Activated T-helper 1 cell treated with anti-CD3 and anti-CD28 coated beads, Interleukin-12 subunit alpha, Interleukin-12 subunit beta, Interleukin-2, Interleukin-4 antibody, amounts not matched to agents 30 ng/mL and 10 ng/mL and 1 ng/mL, durations not matched to agents 14 hours and 24 hours and 36 hours (primary cell): ENCODE measurements at regions of chr10 and their contacts with region 1.

Region 1: GRCh38 chr10:114876602-114877300 is 55.2 kb downstream of the FHIP2A start:
- DNase-seq: peak; percentile 15
- H3K4me3 Mint-ChIP-seq: no peak overlapping the region
- H3K27ac Mint-ChIP-seq: no peak overlapping the region
- H3K4me1 Mint-ChIP-seq: peaks cover 32% of the 10 kb centered on the region
- H3K27me3 Mint-ChIP-seq: peaks cover 21% of the 10 kb centered on the region

Region 2: DNA sequence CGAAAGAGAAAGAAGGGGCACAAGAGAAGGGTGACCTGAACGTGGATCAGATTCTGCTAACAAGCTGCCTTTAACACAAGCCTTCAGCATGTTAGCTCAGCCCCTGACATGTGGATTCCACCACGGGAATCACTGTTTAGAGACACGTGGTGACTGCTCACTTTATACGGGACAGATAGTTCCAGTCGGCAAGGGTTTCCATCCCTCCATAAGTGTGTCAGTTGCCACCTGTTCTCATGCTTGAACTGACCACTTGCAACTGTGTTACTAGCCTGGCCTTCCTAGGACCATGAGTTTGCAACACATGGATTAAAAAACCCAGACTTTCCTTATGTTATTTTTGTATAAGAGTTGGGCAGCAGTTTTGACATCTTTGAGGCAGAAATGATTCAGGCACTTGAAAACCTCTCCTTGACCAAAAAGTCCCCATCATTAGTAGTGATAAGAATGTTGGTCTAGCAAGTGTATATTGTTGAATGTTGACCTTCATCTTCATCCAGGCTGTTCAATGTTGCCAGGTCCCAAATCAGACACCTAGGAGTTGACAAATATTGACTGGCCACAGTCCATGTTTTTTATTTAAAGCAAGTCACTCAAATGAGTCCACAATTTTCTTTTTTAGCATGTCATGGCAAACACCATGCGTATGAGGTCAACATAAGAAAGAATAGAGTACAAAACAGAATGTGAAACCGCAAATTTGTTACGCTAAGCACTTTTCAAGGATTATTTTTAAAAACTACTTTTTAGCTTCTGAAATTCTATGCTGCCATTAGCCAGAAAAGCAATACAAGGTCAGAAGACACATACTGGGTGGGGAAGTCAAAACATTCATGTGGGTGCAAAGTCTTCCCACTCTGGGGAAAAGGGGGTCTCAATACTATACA is 320.3 kb before region 1 on chr10:
- intact Hi-C with region 1: no loop called
- DNase-seq: no peak
- H3K4me3 Mint-ChIP-seq: no peak overlapping the region
- H3K27ac Mint-ChIP-seq: no peak overlapping the region
- H3K4me1 Mint-ChIP-seq: no peaks in the 10 kb centered on the region
- H3K27me3 Mint-ChIP-seq: peaks cover 4% of the 10 kb centered on the region

Region 3: GRCh38 chr10:114893251-114893650 is 16.5 kb after region 1 on chr10:
- intact Hi-C with region 1: no loop called
- DNase-seq: no peak
- H3K4me3 Mint-ChIP-seq: no peak overlapping the region
- H3K27ac Mint-ChIP-seq: no peak overlapping the region
- H3K4me1 Mint-ChIP-seq: no peaks in the 10 kb centered on the region
- H3K27me3 Mint-ChIP-seq: peaks cover 11% of the 10 kb centered on the region

Region 4: GRCh38 chr10:114937962-114938855 is 61.5 kb after region 1 on chr10 and contains the start of gene TRUB1:
- intact Hi-C with region 1: loop called (anchors 1 kb)
- DNase-seq: peak; percentile 83
- H3K4me3 Mint-ChIP-seq: peak within 1 kb of the TSS; percentile 99
- H3K27ac Mint-ChIP-seq: peak within 1 kb of the TSS; percentile 84
- H3K4me1 Mint-ChIP-seq: peaks cover 35% of the 10 kb centered on the region
- H3K27me3 Mint-ChIP-seq: no peaks in the 10 kb centered on the region
- total RNA-seq, gene TRUB1: 21.6 TPM in 2 replicates

Region 5: DNA sequence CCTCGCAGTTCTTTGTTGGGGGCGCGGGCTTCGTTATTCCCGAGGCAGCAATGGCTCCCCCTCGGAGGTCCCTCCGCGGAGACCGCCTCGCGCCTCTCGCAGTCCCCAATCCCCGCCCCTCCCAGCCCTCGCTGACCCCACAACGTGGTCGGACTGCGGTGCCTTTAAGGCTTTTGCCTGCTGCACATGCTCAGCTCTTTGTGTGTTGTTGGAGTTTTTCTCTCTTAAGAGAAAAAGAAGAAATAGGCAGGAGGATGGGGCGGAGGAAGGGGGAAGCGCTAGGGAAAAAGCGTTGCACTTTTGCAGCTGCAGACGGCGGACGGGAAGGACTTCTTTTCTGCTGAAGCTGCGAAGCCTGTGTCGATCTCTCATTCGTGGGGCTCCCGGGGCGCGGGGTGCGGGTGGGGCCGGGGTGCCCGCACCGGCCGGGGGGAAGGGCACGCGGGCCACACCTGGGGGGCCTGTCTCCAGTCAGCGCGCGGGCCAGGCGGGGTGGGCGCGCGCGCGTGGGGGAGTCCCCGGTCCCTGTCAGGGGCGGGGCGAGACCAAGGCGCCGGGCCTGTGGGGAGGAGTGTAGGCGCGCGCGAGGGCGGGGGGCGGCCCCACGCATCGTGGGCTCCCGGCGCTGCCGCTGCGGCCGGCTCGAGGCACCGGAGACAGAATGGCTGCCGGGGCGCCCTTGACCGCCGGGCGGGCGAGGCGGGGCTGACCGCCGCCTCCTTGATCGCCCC is 216.0 kb after region 1 on chr10:
- intact Hi-C with region 1: loop called (anchors 10 kb)
- DNase-seq: peak; percentile 11
- H3K4me3 Mint-ChIP-seq: peak overlapping the region; percentile 79
- H3K27ac Mint-ChIP-seq: no peak overlapping the region
- H3K4me1 Mint-ChIP-seq: no peaks in the 10 kb centered on the region
- H3K27me3 Mint-ChIP-seq: peaks cover 59% of the 10 kb centered on the region

Region 6: DNA sequence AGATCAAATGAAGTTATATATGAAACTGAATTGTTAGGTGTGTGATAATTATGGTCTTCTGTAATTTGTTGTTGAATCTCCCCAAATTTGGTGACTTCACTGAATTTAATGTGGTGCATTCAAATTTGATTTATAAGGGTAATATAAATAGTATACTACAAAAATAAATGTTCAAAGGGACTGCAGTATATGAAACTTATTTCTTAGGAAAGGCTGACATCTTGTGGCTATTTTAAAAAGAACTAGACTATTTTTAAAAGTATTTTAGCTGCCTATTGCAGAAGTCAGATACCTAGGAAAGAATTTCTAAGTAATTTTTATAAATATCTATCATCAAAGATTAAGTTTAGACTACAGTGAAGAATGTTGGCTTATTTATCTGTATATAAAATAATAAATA is 253.0 kb after region 1 on chr10:
- intact Hi-C with region 1: loop called (anchors 1 kb)
- DNase-seq: no peak
- H3K4me3 Mint-ChIP-seq: no peak overlapping the region
- H3K27ac Mint-ChIP-seq: no peak overlapping the region
- H3K4me1 Mint-ChIP-seq: no peaks in the 10 kb centered on the region
- H3K27me3 Mint-ChIP-seq: peaks cover 3% of the 10 kb centered on the region

Region 7: DNA sequence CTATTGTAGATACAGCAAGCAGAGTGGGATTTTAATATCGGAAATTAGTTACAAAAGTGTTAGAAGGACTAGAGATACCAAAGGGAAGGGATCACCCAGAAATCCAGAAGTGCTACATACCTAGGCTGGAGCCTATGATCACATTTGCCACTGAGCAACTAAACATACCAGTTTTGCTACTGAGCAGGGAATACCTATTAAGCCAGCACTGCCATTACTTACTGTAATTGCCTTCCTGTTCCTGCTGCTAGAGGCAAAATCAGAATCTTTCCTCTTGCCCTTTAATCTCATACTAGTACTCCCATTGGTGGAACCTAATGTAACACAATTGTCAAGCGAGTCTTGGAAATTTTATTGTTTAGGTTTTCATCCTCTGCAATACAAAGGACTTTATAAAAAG is 338.1 kb after region 1 on chr10:
- intact Hi-C with region 1: no loop called
- DNase-seq: no peak
- H3K4me3 Mint-ChIP-seq: no peak overlapping the region
- H3K27ac Mint-ChIP-seq: no peak overlapping the region
- H3K4me1 Mint-ChIP-seq: no peaks in the 10 kb centered on the region
- H3K27me3 Mint-ChIP-seq: no peaks in the 10 kb centered on the region